Lower leg skin (tissue), 4 donors: ENCODE measurements at regions of chr2 and their contacts with region 1.

Region 1: GRCh38 chr2:155235710-155236109 is 537.2 kb downstream of the KCNJ3 start:
- DNase-seq: no peak
- H3K4me3 ChIP-seq: no peak overlapping the region
- CTCF ChIP-seq: no peak
- POLR2A ChIP-seq: no peak

Region 2: GRCh38 chr2:155218292-155218924 is 17.3 kb before region 1 on chr2:
- intact Hi-C with region 1: loop called (anchors 1 kb)
- DNase-seq: no peak
- H3K4me3 ChIP-seq: no peak overlapping the region
- CTCF ChIP-seq: no peak
- POLR2A ChIP-seq: no peak

Region 3: DNA sequence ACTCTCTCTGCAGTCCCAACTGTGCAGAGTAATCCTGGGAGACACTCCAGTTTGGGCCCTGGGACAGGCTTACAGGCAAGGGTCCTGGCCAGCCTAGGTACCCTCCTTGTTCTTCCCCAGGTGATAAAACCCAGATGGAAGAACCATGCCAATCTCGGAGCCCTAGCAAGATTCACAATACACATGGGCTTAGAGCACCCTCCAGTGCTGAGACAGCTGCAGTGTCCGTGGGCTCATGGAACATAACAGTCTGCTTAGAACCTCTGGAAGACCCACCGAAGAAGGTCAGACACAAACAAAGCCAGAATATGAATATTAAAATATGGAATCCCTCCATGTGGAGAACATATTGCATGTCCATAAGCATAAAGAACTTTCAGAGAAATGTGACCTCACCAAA is 30.9 kb after region 1 on chr2:
- intact Hi-C with region 1: loop called (anchors 1 kb)
- DNase-seq: no peak
- H3K4me3 ChIP-seq: no peak overlapping the region
- CTCF ChIP-seq: no peak
- POLR2A ChIP-seq: no peak